Activated CD4-positive, alpha-beta T cell treated with anti-CD3 and anti-CD28 coated beads for 36 hours (primary cell): ENCODE measurements at regions of chr1 and their contacts with region 1.

Region 1: GRCh38 chr1:203823306-203823705 is 27.9 kb downstream of the ZBED6 start:
- DNase-seq: no peak
- ATAC-seq: no peak
- H3K4me3 Mint-ChIP-seq: no peak overlapping the region
- H3K27ac Mint-ChIP-seq: no peak overlapping the region
- H3K4me1 Mint-ChIP-seq: peaks cover 26% of the 10 kb centered on the region
- H3K27me3 Mint-ChIP-seq: no peaks in the 10 kb centered on the region

Region 2: DNA sequence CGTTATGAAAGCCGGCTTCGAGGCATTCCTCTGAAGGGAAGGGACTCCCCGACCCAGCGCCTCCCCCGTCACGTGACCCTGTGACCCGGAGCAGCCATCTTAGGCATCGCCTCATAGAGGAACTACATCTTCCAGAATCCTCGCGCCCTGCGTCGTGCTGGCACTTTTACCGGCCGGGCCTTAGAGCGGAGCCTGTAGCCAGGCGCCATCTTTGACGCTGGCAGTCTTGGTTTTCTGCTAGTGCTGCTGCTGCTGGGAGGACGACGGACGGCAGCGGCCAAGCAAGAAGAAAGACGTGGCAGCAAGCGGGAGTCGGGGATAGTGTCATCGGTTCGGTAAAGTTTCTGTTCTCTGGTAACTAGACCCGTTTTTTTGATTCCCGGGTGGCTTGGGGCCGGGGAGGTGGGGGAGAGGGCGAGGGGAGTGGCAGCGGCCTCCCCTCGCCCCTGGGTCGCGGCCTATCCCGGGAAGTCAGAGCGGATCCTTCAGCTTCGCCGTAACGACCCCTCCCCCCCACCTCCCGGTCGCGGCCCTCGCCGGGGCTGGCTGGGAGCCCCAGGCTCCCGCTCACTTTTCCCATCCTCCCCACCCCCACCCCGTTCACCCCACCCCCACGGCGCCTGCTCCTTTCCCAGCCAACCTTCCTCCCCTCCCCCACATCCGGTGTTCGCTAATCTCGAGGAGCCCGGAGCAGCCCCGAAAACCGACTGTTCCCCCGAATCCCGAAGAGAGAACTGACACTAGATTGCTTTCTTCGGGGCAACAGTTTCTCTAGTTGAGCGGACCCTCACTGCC is 27.7 kb before region 1 on chr1 and contains the starts of genes ZBED6 and ZC3H11A:
- CTCF ChIA-PET with region 1: no interaction called
- POLR2A ChIA-PET with region 1: no interaction called
- intact Hi-C with region 1: loop called in 1 of 2 experiments (anchors 1 kb)
- DNase-seq: peak; percentile 99
- ATAC-seq: peak; percentile 99
- H3K4me3 Mint-ChIP-seq: peak within 1 kb of the TSS; percentile 86
- H3K27ac Mint-ChIP-seq: peak within 1 kb of the TSS; percentile 96
- H3K4me1 Mint-ChIP-seq: peaks cover 45% of the 10 kb centered on the region
- H3K27me3 Mint-ChIP-seq: no peaks in the 10 kb centered on the region
- total RNA-seq, gene ZBED6: 16.4 to 19.3 TPM
- total RNA-seq, gene ZC3H11A: 92.8 to 112 TPM

Region 3: DNA sequence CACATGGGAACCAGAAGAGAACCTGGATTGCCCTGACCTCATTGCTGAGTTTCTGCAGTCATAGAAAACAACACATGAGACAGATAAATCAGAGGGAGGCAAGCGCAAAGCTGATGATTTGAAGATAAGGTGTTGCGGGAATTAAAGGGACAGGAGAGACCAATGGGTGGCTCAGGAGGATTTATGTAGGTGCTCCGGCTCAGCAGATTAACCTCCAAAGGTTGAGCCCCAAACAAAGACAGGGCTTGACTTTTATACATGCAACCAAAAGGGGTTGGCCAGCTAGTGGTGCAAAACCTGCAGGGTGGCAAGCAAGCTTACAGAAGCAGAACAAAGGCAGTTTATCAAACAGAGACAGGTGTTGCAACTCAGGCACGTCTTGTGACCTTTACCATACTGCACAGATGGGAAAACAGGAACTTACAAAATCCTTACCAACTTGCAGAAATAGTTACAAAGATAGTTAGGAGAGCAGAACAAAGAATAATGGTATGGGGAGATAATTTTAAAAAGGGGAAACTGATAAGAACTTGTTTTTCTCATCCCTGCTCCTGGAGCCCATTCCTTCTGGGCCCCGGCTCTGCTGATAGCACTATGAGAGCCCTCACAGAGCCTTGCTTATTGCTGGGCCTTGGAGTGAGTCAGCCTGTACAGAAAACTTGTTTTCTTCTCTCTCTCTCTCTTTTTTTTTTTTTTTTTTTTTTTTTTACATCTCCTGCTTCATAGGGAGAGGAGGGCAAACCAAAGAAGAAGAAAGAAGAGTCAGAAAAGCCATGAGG is 131.7 kb after region 1 on chr1:
- CTCF ChIA-PET with region 1: no interaction called
- POLR2A ChIA-PET with region 1: no interaction called
- intact Hi-C with region 1: no loop called
- DNase-seq: no peak
- ATAC-seq: no peak
- H3K4me3 Mint-ChIP-seq: no peak overlapping the region
- H3K27ac Mint-ChIP-seq: no peak overlapping the region
- H3K4me1 Mint-ChIP-seq: no peaks in the 10 kb centered on the region
- H3K27me3 Mint-ChIP-seq: peaks cover 19% of the 10 kb centered on the region

Region 4: DNA sequence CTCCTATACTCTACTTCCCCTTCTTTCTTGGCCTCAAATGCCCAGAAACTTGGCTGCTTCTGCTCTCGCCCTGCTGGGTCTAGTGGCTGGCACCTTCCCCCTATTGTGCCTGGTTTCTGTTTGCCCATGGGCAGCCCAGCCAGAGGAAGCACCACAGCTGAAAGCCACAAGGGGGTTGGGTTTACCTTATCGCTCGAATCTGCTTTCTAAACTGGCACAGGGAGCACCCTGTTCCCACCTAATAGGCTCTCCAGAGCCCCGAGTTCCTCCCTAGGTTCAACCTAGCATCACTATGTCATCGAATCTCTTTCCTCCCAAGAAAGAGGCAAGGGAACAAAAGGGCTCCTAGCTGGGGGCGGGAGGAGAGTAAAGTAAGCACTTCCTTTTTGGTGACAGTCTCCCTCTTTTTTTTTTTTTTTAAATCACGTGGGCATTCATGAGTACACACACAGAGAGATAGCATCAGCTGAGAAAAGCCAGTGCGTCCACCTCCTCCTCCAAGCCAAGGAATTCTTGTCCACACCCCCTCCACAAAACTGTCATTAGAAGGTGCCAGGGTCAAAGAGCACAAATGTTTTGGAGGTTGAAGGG is 463.6 kb after region 1 on chr1:
- CTCF ChIA-PET with region 1: no interaction called
- POLR2A ChIA-PET with region 1: no interaction called
- intact Hi-C with region 1: no loop called
- DNase-seq: peak; percentile 50
- ATAC-seq: peak; percentile 84
- H3K4me3 Mint-ChIP-seq: peak overlapping the region; percentile 50
- H3K27ac Mint-ChIP-seq: peak overlapping the region; percentile 87
- H3K4me1 Mint-ChIP-seq: peaks cover 22% of the 10 kb centered on the region
- H3K27me3 Mint-ChIP-seq: peaks cover 3% of the 10 kb centered on the region